Heart right ventricle (tissue), 16 donors: ENCODE measurements at regions of chr1 and their contacts with region 1.

Region 1: DNA sequence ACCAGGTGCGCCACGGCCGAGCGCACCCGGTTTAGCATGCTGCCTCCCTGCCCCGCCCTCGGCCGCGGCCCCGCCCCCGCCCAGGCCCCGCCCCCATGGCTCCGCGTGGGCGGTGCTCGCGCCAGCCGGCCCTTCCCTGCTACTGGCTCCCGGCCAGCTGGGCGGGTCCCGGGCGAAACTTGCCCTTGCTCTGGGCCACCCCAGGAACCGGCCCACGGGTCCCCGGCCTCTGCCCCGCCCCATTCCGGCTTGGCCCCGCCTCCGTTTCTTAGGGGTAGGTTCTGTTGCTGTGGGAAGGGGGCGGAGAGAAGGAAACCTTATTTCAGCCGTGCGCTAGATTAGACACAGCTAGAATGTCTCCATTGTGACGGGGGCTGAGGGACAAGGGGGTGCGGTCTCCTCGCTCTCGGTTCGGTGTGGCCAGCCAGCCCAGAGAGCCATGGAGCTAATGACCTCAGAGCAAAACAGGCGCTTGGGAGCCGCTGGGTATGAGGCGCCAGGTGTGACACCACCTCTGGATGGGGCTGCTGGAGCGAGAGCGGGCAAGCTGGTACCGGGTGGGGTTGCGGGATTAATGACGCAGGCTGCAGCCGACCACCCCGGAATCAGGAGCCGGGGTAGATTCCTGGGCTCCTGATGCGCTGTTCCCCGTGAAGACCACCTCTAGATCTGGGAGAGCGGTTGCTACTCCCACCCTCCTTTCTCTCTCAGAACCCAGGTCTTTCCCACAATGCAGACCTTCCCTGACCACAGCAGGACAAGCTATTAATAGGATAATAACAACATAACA is at the start of gene PPM1J:
- DNase-seq: peak; percentile 98 to 99
- ATAC-seq: peak; percentile 87 to 96 (median 91)
- H3K4me3 ChIP-seq: peak within 1 kb of the TSS; percentile 55 to 81 (median 71)
- H3K27ac ChIP-seq: peak within 1 kb of the TSS in 9 of 10 donors; percentile 67 to 88 (median 78)
- H3K4me1 ChIP-seq: peaks cover 2 to 35% (median 23%) of the 10 kb centered on the region in 9 donors
- H3K27me3 ChIP-seq: peaks cover 0 to 30% (median 12%) of the 10 kb centered on the region in 7 donors
- CTCF ChIP-seq: peak in 1 of 9 donors; percentile 2
- total RNA-seq, gene PPM1J: 5.8 to 11.0 (median 8.5) TPM

Region 2: GRCh38 chr1:112803906-112804762 is 88.7 kb after region 1 on chr1:
- intact Hi-C with region 1: loop called (anchors 1 to 5 kb)
- DNase-seq: peak; percentile 50 to 65
- ATAC-seq: peak; percentile 82 to 90 (median 86)
- H3K4me3 ChIP-seq: no peak overlapping the region
- H3K27ac ChIP-seq: no peak overlapping the region
- H3K4me1 ChIP-seq: peaks cover 0 to 5% (median 0%) of the 10 kb centered on the region in 9 donors
- H3K27me3 ChIP-seq: no peaks in the 10 kb centered on the region
- CTCF ChIP-seq: peak; percentile 34 to 82 (median 75)

Region 3: GRCh38 chr1:113269168-113269963 is 553.9 kb after region 1 on chr1:
- intact Hi-C with region 1: no loop called
- DNase-seq: no peak
- ATAC-seq: no peak
- H3K4me3 ChIP-seq: no peak overlapping the region
- H3K27ac ChIP-seq: no peak overlapping the region
- H3K4me1 ChIP-seq: no peaks in the 10 kb centered on the region
- H3K27me3 ChIP-seq: peaks cover 0 to 5% (median 0%) of the 10 kb centered on the region in 7 donors
- CTCF ChIP-seq: no peak